MCF 10A (cell line): ENCODE measurements at regions of chr7 and their contacts with region 1.

Region 1: GRCh38 chr7:132580717-132581285 is 4.5 kb upstream of the PLXNA4 start:
- DNase-seq: peak; percentile 78
- H3K4me3 Mint-ChIP-seq: no peak overlapping the region
- H3K27ac Mint-ChIP-seq: no peak overlapping the region
- H3K4me1 Mint-ChIP-seq: no peaks in the 10 kb centered on the region
- H3K27me3 Mint-ChIP-seq: peaks cover 32% of the 10 kb centered on the region
- CTCF ChIP-seq: peak; percentile 64

Region 2: GRCh38 chr7:131688738-131689661 is 891.8 kb before region 1 on chr7:
- CTCF ChIA-PET with region 1: interaction called, 32 read pairs
- POLR2A ChIA-PET with region 1: no interaction called
- intact Hi-C with region 1: loop called (anchors 1 kb)
- DNase-seq: peak; percentile 70
- H3K4me3 Mint-ChIP-seq: no peak overlapping the region
- H3K27ac Mint-ChIP-seq: no peak overlapping the region
- H3K4me1 Mint-ChIP-seq: peaks cover 6% of the 10 kb centered on the region
- H3K27me3 Mint-ChIP-seq: peaks cover 89% of the 10 kb centered on the region
- CTCF ChIP-seq: peak; percentile 89

Region 3: GRCh38 chr7:132292803-132293202 is 288.0 kb before region 1 on chr7:
- CTCF ChIA-PET with region 1: interaction called, 13 read pairs
- POLR2A ChIA-PET with region 1: no interaction called
- intact Hi-C with region 1: no loop called
- DNase-seq: no peak
- H3K4me3 Mint-ChIP-seq: no peak overlapping the region
- H3K27ac Mint-ChIP-seq: no peak overlapping the region
- H3K4me1 Mint-ChIP-seq: no peaks in the 10 kb centered on the region
- H3K27me3 Mint-ChIP-seq: peaks cover 11% of the 10 kb centered on the region
- CTCF ChIP-seq: no peak

Region 4: GRCh38 chr7:132318352-132319318 is 262.2 kb before region 1 on chr7:
- CTCF ChIA-PET with region 1: interaction called, 27 read pairs
- POLR2A ChIA-PET with region 1: interaction called, 3 read pairs
- intact Hi-C with region 1: loop called (anchors 1 kb)
- DNase-seq: peak; percentile 79
- H3K4me3 Mint-ChIP-seq: no peak overlapping the region
- H3K27ac Mint-ChIP-seq: no peak overlapping the region
- H3K4me1 Mint-ChIP-seq: no peaks in the 10 kb centered on the region
- H3K27me3 Mint-ChIP-seq: peaks cover 41% of the 10 kb centered on the region
- CTCF ChIP-seq: peak; percentile 87

Region 5: DNA sequence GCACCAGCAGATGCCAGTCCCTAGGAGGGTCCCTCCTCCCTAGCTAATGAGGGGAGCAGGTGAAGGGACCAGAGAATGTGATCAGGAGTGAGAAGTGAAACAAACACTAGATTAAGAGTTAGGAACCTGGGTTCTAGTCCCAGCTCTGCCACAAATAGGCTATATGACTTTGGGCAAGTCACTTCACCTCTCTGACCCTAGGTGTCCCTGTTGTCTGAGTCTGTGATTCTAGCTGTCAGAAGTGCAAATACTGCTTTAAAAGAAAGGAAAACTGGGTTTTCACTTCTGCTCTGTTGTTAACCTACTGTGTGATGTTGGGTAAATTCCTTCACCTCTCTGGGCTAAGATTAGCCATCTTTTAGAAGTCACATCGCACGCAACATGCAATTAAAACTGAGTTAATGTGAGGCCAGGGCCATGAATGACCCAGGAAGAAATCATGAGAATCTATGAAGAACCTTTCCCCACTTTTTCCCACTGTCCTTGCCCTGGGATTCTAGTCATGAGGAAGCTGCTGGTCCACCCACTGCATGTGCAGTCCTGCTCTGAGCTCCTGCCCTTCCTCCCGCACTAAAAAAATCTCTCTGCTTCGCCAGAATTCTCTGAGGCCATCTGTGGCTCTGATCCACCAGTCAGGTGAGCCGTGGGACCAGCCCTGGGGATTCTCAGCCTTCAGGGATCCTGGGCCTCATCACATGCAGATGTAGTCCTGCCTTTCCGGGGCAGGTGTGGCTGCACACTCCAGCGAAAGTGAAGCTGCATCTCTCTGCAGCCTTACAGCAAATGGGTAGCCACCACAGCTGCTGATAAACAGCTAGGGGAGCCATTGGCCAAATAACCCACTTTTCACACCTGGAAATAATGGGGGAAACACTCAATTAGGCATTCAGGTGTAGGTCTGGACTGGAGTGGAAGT is 186.3 kb before region 1 on chr7:
- CTCF ChIA-PET with region 1: interaction called, 7 read pairs
- POLR2A ChIA-PET with region 1: no interaction called
- intact Hi-C with region 1: loop called (anchors 1 kb)
- DNase-seq: peak; percentile 26
- H3K4me3 Mint-ChIP-seq: no peak overlapping the region
- H3K27ac Mint-ChIP-seq: no peak overlapping the region
- H3K4me1 Mint-ChIP-seq: no peaks in the 10 kb centered on the region
- H3K27me3 Mint-ChIP-seq: peaks cover 25% of the 10 kb centered on the region
- CTCF ChIP-seq: peak; percentile 24

Region 6: DNA sequence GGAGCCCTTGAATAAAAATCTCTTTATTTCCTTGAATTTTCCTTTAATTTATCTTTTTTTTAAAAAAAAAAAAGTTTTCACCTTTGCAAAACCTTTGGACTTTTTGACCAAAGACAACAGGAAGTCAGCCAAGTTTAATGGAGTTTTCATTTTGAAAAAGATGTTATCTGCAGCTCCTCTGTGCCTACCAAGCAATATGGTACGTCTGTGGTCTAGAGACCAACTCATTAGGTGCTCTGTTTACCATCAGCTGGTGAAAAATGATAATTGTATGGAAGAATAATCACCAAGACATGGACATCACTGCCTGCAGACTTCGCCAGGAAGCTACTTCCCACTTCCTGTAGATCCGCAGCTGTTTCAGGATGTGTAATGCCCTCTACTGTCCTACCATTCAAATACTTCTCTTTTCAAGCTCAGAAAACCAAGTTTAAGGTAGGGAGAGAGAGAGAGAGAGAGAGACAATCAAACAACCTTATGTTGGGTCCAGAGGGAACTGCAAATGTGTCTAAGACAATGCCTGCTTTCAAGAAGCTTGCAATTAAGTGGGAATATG is 23.2 kb before region 1 on chr7:
- CTCF ChIA-PET with region 1: interaction called, 18 read pairs
- POLR2A ChIA-PET with region 1: interaction called, 3 read pairs
- intact Hi-C with region 1: no loop called
- DNase-seq: peak; percentile 14
- H3K4me3 Mint-ChIP-seq: no peak overlapping the region
- H3K27ac Mint-ChIP-seq: no peak overlapping the region
- H3K4me1 Mint-ChIP-seq: no peaks in the 10 kb centered on the region
- H3K27me3 Mint-ChIP-seq: peaks cover 17% of the 10 kb centered on the region
- CTCF ChIP-seq: no peak

Region 7: DNA sequence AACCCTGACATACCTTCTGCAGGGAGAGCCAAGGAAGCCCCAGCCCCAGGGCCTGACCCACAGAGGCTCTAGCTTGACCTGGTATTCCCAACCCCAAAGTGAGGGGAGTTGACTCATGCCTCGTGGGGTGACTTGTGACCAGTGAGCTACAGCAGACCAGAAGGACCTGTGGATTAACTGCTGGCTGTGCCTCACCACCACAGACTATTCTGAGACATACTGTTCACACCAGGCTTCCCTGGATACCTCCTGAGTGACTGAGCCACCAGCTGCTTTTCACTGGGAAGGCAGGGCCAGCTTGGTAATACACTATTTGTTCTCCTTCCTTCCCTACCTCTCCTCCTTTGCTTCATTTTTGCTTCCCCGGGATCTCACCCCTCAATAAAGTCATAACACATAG is 11.8 kb before region 1 on chr7:
- CTCF ChIA-PET with region 1: interaction called, 26 read pairs
- POLR2A ChIA-PET with region 1: no interaction called
- intact Hi-C with region 1: no loop called
- DNase-seq: no peak
- H3K4me3 Mint-ChIP-seq: no peak overlapping the region
- H3K27ac Mint-ChIP-seq: no peak overlapping the region
- H3K4me1 Mint-ChIP-seq: no peaks in the 10 kb centered on the region
- H3K27me3 Mint-ChIP-seq: peaks cover 71% of the 10 kb centered on the region
- CTCF ChIP-seq: no peak